Right ventricle myocardium superior (tissue), 1 donor: ENCODE measurements at regions of chr7 and their contacts with region 1.

Region 1: GRCh38 chr7:150451097-150451793 is 815 bp downstream of the GIMAP8 start:
- DNase-seq: peak; percentile 83
- ATAC-seq: peak; percentile 65

Region 2: DNA sequence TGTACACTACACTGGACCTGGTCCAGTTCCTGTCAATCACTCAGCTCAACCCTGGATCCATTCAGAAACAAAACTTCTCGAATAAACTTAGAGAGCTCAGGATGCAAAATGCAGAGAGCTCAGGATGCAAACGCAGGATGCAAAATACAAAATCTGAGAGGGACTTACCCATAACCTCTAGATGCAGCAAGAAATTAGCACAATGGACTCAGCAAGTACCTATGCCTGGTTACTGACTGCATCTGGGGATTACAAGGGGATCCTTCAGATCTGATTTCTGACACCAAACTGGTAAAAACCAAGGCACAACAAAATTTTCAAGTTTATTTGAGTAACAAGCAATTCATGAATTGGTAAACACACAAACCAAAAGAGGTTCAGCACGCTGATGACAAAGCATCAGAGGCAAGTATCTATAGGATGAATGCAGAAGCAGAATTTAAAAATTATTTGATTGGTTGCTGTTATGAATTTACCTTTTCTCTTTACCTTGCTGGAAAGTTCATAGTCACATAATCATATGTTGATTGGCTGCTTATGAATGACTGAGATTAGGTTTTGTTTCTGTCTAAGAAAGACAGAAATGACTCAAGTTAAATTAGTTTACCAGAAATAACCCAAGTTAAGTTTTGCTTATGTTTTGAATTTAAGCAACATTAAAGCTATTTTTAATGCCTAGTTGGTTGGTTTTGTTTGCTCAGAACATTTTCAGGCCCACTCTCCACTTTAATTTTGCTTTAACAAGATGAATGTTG is 169.5 kb after region 1 on chr7:
- intact Hi-C with region 1: loop called (anchors 10 kb)
- DNase-seq: no peak
- ATAC-seq: no peak

Region 3: GRCh38 chr7:150740053-150740452 is 288.8 kb after region 1 on chr7:
- intact Hi-C with region 1: loop called (anchors 5 kb)
- DNase-seq: no peak
- ATAC-seq: no peak

Region 4: GRCh38 chr7:150753826-150754603 is 302.8 kb after region 1 on chr7:
- intact Hi-C with region 1: loop called (anchors 2 kb)
- DNase-seq: no peak
- ATAC-seq: no peak